ENCODE measurements at regions of chr12 and their contacts with region 1.

Region 1: GRCh38 chr12:119444456-119445044 is 110.0 kb downstream of the CCDC60 start:
- DNase-seq: no peak

Region 2: DNA sequence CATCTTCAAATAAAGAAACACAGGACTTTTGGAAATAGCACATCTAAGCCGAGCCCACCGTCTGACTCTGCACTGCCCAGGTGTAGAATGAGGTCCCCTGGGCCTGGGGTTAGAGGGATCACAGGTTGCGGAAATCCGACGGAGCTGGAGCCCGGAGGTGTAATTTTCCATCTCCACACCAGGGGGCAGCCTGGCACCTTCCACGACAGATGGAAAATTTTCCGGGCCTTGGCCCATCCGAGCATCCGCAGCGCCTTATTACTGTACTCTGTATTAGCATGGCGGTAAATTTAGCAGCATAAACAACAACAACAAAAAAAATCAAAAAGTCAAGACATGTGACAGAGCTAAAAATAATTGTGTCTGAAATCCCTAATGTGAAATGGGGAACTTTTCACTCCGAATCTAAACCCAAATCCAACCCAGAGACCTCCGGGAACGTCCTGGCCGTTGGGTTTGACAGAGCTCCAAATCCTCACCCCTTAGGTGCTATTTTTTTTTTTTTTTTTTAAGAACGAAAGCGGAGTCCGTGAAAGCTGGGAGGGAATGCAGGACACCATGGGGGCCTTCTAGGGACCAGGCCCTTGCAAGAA is 1569.6 kb before region 1 on chr12:
- intact Hi-C with region 1: loop called in 1 of 2 experiments (anchors 5 kb)
- DNase-seq: peak; percentile 88

Measured in posterior vena cava (tissue), 2 donors.